IMR-90 (cell line): ENCODE measurements at regions of chr16 and their contacts with region 1.

Region 1: DNA sequence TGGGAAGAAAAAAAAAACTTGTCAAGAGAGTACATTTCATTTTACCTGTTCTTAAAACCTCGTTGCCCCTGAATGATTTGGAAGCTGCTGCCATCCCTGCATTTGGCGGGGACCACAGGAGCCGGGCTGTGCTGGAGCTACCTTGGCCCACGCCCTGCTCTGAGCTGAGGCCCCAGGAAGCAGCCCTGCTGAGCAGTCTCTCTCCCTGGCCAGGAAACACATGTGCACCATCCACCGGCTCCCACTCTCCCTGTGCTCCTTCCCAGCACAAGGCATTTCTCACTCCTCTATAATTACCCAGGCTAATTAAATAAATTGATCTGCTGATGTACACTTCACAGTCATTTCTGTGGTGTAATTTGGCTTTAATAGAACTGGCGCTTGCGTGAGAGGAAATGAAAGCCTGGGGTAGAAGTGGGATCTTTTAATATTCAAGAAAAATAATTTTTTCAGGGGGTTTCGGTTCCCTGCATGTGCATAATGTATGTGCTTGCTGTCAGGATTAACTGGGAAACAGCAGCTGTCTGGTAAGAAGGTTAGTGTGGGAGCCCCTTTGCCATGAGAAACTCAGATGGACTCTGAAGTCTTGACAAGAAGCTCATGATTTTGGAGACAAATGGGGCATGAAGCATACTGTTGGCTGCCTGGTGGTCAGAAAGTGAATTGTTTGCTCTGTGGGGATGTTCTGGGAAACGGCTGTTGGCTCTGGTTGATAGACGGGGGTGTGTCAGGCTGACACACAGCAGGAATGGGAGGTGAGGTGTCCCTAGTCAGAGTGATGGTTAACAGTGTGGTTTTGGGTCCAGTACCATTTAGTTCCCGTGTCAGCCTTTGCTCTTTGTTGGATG is 252.3 kb upstream of the EEF2KMT start:
- DNase-seq: no peak
- ATAC-seq: no peak
- H3K4me3 ChIP-seq: no peak overlapping the region
- H3K27ac ChIP-seq: no peak overlapping the region
- H3K4me1 ChIP-seq: no peaks in the 10 kb centered on the region
- H3K27me3 ChIP-seq: no peaks in the 10 kb centered on the region
- CTCF ChIP-seq: no peak
- POLR2A ChIP-seq: no peak
- RAD21 ChIP-seq: no peak

Region 2: GRCh38 chr16:5428932-5429331 is 79.0 kb after region 1 on chr16:
- CTCF ChIA-PET with region 1: no interaction called
- POLR2A ChIA-PET with region 1: no interaction called
- dilution Hi-C with region 1: no loop called
- in situ Hi-C with region 1: loop called (anchors 25 kb)
- intact Hi-C with region 1: no loop called
- DNase-seq: no peak
- ATAC-seq: no peak
- H3K4me3 ChIP-seq: no peak overlapping the region
- H3K27ac ChIP-seq: no peak overlapping the region
- H3K4me1 ChIP-seq: no peaks in the 10 kb centered on the region
- H3K27me3 ChIP-seq: no peaks in the 10 kb centered on the region
- CTCF ChIP-seq: no peak
- POLR2A ChIP-seq: no peak
- RAD21 ChIP-seq: no peak